PC-3 (cell line): ENCODE measurements at regions of chr1 and their contacts with region 1.

Region 1: DNA sequence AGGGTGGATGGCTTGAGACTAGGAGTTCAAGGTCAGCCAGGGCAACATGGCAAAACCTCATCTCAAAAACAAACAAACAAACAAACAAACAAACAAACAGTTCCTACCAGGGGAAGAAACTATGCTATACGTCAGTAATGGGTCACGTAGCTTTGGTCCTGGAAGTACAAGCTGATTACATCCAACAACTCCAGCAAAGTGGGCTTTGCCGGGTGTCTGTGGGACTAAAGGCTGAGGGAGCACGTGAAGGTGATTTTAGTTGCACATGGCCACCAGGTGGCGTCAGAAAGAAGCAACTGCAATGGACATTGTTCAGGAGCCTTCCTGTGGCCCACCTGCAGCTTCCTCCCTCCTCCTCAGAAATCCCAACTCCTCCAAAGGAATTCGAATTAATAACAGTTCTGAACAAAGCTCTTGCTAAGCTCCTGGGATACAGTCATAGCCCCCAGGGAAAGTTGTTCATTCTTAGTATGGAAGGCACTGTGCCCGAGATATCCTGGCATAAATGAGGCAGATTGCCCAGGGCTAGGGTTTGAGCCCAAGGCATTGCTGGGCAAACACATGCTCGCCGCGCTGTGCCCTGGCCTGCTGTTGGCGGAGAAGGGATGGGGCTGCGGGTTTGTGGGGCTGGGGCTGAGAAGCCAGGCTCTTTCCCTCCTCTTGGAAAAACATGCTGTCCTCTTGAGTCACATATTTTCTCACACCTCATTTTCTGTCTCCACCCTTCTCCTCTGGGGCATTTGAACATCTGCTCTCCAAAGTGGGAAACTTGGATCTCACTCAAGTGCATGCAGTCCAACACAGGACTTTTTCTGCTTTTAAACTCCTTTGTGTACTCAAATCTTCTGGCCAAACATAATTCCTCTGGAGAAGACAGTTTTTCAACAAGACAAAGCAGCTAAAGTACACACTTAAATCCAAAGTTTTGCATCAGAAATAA is 28.6 kb downstream of the AKNAD1 start:
- DNase-seq: peak; percentile 89
- ATAC-seq: peak; percentile 35
- H3K4me3 ChIP-seq: no peak overlapping the region
- H3K27ac ChIP-seq: peak overlapping the region; percentile 93
- H3K4me1 ChIP-seq: peaks cover 42% of the 10 kb centered on the region
- H3K27me3 ChIP-seq: no peaks in the 10 kb centered on the region
- CTCF ChIP-seq: peak; percentile 89

Region 2: DNA sequence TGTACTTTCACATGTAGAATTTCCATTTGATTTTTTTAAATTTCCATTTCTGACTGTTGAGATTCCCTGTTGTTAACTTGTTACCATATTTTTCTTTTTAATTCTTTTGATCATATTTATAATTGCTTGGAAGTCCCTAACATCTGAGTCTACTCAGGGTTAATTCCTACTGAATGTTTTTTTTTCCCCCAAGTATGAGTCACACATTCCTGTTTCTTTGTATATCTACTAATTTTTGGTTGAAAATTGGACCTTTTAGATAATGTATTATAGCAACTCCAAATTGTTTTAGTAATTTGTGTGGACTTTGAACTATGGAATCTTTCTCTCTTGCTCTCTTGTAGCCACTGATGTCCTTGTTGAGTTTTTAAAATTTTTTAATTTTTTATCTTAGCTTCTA is 27.2 kb before region 1 on chr1:
- CTCF ChIA-PET with region 1: no interaction called
- POLR2A ChIA-PET with region 1: no interaction called
- intact Hi-C with region 1: no loop called
- DNase-seq: no peak
- ATAC-seq: no peak
- H3K4me3 ChIP-seq: no peak overlapping the region
- H3K27ac ChIP-seq: no peak overlapping the region
- H3K4me1 ChIP-seq: no peaks in the 10 kb centered on the region
- H3K27me3 ChIP-seq: no peaks in the 10 kb centered on the region
- CTCF ChIP-seq: no peak

Region 3: DNA sequence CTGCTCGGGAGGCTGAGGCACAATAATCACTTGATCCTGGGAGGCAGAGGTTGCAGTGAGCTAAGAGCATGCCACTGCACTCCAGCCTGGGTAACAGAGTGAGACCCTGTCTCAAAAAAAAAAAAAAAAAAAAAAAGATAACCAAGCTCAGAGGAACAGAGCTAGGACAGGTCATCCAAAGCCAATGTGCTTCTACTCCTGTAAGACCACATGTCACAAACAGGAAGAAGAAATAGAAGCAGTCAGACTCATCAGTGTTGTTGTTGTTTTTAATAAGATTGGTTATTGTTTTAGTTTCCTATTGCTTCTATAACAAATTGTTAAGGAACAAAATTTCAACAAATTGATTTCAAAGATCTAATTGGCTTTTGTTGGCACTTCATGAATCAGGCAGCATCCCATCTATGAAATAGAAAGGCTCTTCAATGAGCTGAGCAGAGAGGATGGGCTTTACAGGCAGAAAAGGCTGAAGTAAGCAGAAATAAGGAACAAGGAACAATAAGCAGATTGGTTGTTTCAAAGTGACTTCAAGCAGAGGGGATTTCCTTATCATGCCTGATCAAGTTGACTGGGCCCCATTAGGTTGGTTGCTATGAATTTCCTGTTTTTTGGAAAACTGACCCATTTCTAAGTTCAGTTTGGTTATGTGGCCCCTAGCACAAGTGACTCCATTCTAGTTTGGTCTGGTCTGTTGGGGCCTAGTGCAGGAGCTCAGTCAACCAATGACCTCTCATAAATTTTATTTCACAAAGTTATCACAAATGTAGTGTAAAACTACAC is 34.6 kb after region 1 on chr1:
- CTCF ChIA-PET with region 1: no interaction called
- POLR2A ChIA-PET with region 1: no interaction called
- intact Hi-C with region 1: no loop called
- DNase-seq: no peak
- ATAC-seq: no peak
- H3K4me3 ChIP-seq: no peak overlapping the region
- H3K27ac ChIP-seq: no peak overlapping the region
- H3K4me1 ChIP-seq: no peaks in the 10 kb centered on the region
- H3K27me3 ChIP-seq: no peaks in the 10 kb centered on the region
- CTCF ChIP-seq: no peak

Region 4: DNA sequence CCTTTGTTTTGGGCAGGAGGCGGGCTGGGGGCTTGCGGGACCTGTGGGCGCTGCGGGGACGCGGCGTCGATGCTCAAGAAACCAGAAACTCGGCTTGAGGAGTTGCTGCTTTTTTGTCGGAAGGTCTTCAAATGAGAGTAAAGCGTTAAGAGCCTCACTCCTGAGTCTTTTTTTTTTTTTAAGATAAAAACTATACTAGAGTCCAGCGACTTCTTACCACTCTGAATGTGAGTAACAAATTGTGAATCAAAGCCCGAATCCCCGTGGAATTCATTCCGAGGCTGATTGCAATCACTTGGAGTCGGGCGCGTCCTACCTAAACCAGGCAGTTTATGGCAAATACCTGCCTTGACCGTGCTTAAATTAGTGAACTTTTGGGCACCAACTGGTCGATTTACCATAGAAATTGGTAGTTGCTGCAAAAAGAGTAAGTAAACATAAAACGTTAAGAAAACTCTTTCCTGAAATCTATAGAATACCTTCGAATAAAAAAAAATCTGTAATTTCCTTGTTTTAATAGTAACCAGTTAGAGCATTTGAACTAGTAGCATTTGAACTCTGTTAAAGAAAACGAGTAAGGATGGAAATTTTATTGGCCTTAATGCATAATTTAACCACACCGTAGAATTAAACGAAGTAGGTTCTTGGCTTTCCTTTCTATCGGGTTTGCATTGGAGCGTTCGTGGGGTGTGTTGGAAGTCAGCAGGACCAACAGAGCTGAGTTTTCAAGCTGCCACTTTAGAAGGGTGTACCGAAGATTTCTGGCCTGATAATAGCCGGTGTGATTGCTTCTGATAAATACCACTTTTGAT is 49.3 kb after region 1 on chr1:
- CTCF ChIA-PET with region 1: no interaction called
- POLR2A ChIA-PET with region 1: no interaction called
- intact Hi-C with region 1: loop called (anchors 1 kb)
- DNase-seq: peak; percentile 39
- ATAC-seq: peak; percentile 23
- H3K4me3 ChIP-seq: peak overlapping the region; percentile 87
- H3K27ac ChIP-seq: 0 out of 2 replicates have a peak overlapping the region, but pooled peaks have one; percentile 12
- H3K4me1 ChIP-seq: peaks cover 20% of the 10 kb centered on the region
- H3K27me3 ChIP-seq: no peaks in the 10 kb centered on the region
- CTCF ChIP-seq: no peak

Region 5: DNA sequence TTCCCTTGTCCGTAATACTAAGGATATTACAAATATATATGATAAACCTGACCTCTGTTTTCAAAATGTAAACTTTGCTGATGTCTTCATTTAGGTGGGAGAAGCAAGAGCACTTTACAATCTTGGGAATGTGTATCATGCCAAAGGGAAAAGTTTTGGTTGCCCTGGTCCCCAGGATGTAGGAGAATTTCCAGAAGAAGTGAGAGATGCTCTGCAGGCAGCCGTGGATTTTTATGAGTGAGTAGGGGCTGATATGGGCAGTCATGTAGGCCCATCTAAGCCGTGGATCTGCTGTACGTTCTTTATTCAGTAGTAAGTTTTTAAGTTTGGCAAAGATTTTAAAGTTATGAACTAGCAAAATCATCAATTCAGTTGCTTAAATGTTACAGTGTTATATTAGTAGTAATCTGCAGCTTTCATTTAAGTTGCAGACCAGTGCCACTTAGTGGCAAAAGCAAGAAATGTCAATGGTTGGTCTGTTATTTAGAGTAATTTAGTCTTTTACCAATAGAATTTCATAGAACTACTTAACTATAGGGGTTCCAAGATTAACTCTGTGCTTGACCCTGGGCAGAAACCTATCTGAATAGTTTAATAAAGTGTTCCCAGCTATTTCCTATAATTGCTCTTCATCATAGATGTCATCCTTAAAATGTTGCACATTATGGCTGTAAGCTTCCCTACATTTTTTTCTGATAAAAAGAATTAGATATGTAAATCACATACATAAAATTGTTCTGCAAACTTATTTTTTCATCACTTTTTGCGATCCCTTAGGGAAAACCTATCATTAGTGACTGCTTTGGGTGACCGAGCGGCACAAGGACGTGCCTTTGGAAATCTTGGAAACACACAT is 69.8 kb after region 1 on chr1:
- CTCF ChIA-PET with region 1: interaction called, 7 read pairs
- POLR2A ChIA-PET with region 1: interaction called, 4 read pairs
- intact Hi-C with region 1: loop called (anchors 1 kb)
- DNase-seq: peak; percentile 80
- ATAC-seq: peak; percentile 60
- H3K4me3 ChIP-seq: no peak overlapping the region
- H3K27ac ChIP-seq: no peak overlapping the region
- H3K4me1 ChIP-seq: peaks cover 14% of the 10 kb centered on the region
- H3K27me3 ChIP-seq: no peaks in the 10 kb centered on the region
- CTCF ChIP-seq: peak; percentile 84

Region 6: GRCh38 chr1:108913105-108913948 is 85.0 kb after region 1 on chr1:
- CTCF ChIA-PET with region 1: no interaction called
- POLR2A ChIA-PET with region 1: no interaction called
- intact Hi-C with region 1: no loop called
- DNase-seq: no peak
- ATAC-seq: no peak
- H3K4me3 ChIP-seq: no peak overlapping the region
- H3K27ac ChIP-seq: no peak overlapping the region
- H3K4me1 ChIP-seq: no peaks in the 10 kb centered on the region
- H3K27me3 ChIP-seq: no peaks in the 10 kb centered on the region
- CTCF ChIP-seq: no peak

Region 7: GRCh38 chr1:108933944-108934343 is 105.7 kb after region 1 on chr1:
- CTCF ChIA-PET with region 1: no interaction called
- POLR2A ChIA-PET with region 1: no interaction called
- intact Hi-C with region 1: no loop called
- DNase-seq: no peak
- ATAC-seq: no peak
- H3K4me3 ChIP-seq: no peak overlapping the region
- H3K27ac ChIP-seq: no peak overlapping the region
- H3K4me1 ChIP-seq: no peaks in the 10 kb centered on the region
- H3K27me3 ChIP-seq: no peaks in the 10 kb centered on the region
- CTCF ChIP-seq: no peak

Region 8: GRCh38 chr1:109099938-109100773 is 271.9 kb after region 1 on chr1:
- CTCF ChIA-PET with region 1: no interaction called
- POLR2A ChIA-PET with region 1: interaction called, 10 read pairs
- intact Hi-C with region 1: no loop called
- DNase-seq: peak; percentile 97
- ATAC-seq: peak; percentile 91
- H3K4me3 ChIP-seq: peak overlapping the region; percentile 92
- H3K27ac ChIP-seq: peak overlapping the region; percentile 41; the same call in 1 of the 2 replicates
- H3K4me1 ChIP-seq: peaks cover 11% of the 10 kb centered on the region
- H3K27me3 ChIP-seq: no peaks in the 10 kb centered on the region
- CTCF ChIP-seq: peak; percentile 85